Heart left ventricle (tissue), 16 donors: ENCODE measurements at regions of chr17 and their contacts with region 1.

Region 1: GRCh38 chr17:8041249-8041928 is 2.5 kb downstream of the ALOX15B start:
- DNase-seq: no peak
- ATAC-seq: peak; percentile 59 to 83 (median 63)
- H3K4me3 ChIP-seq: no peak overlapping the region
- H3K27ac ChIP-seq: peak overlapping the region in 2 of 12 donors; percentile 15 to 45
- H3K4me1 ChIP-seq: peaks cover 0 to 26% (median 0%) of the 10 kb centered on the region in 12 donors
- H3K27me3 ChIP-seq: peaks cover 0 to 27% (median 10%) of the 10 kb centered on the region in 9 donors
- CTCF ChIP-seq: peak; percentile 44 to 72 (median 56)
- POLR2A ChIP-seq: no peak

Region 2: GRCh38 chr17:7740481-7741001 is 300.8 kb before region 1 on chr17:
- intact Hi-C with region 1: loop called in 5 of 10 experiments (anchors 5 to 10 kb)
- DNase-seq: no peak
- ATAC-seq: peak in 1 of 4 donors; percentile 30
- H3K4me3 ChIP-seq: peak overlapping the region in 8 of 12 donors; percentile 12 to 35 (median 24)
- H3K27ac ChIP-seq: no peak overlapping the region
- H3K4me1 ChIP-seq: peaks cover 0 to 13% (median 0%) of the 10 kb centered on the region in 12 donors
- H3K27me3 ChIP-seq: peaks cover 0 to 13% (median 4%) of the 10 kb centered on the region in 9 donors
- CTCF ChIP-seq: no peak
- POLR2A ChIP-seq: no peak

Region 3: DNA sequence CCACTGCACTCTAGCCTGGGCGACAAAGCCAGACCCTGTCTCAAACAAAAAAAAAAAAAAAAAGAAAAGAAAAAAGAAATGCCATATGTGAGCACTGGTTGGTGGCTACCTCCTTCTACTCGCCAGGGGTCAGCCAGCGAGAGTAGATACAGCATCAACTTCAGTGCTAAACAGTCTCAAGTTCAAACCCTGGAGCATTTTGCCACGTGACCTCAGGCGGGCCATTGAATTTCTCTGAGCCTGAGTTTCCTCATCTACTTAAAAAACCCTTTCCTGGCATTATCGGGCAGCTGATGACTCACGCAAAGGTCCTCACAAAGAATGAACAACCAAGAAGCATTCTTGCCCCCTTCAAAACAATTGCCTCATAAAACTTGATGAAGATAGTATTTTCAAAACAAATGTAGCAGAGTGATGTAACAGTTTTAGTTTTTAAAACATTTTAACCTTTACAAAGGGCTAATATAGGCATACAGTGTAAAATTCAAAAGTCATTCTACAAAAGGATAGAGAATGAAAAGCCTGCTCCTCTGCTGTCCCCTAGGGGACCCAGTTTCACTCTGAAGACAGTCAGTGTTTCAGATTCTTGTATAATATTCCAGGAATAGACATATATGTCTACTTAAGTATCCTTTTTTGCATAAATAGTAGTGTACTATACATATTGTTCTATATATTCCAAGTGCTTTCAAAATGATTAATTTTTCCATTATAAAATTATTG is 295.5 kb before region 1 on chr17:
- intact Hi-C with region 1: loop called in 5 of 10 experiments (anchors 5 to 10 kb)
- DNase-seq: no peak
- ATAC-seq: no peak
- H3K4me3 ChIP-seq: no peak overlapping the region
- H3K27ac ChIP-seq: no peak overlapping the region
- H3K4me1 ChIP-seq: peaks cover 0 to 10% (median 5%) of the 10 kb centered on the region in 12 donors
- H3K27me3 ChIP-seq: peaks cover 0 to 5% (median 0%) of the 10 kb centered on the region in 9 donors
- CTCF ChIP-seq: no peak
- POLR2A ChIP-seq: no peak

Region 4: GRCh38 chr17:7818746-7819645 is 222.4 kb before region 1 on chr17:
- intact Hi-C with region 1: loop called in 1 of 10 experiments (anchors 10 kb)
- DNase-seq: no peak
- ATAC-seq: peak in 1 of 4 donors; percentile 8
- H3K4me3 ChIP-seq: no peak overlapping the region
- H3K27ac ChIP-seq: no peak overlapping the region
- H3K4me1 ChIP-seq: no peaks in the 10 kb centered on the region
- H3K27me3 ChIP-seq: no peaks in the 10 kb centered on the region
- CTCF ChIP-seq: no peak
- POLR2A ChIP-seq: no peak

Region 5: DNA sequence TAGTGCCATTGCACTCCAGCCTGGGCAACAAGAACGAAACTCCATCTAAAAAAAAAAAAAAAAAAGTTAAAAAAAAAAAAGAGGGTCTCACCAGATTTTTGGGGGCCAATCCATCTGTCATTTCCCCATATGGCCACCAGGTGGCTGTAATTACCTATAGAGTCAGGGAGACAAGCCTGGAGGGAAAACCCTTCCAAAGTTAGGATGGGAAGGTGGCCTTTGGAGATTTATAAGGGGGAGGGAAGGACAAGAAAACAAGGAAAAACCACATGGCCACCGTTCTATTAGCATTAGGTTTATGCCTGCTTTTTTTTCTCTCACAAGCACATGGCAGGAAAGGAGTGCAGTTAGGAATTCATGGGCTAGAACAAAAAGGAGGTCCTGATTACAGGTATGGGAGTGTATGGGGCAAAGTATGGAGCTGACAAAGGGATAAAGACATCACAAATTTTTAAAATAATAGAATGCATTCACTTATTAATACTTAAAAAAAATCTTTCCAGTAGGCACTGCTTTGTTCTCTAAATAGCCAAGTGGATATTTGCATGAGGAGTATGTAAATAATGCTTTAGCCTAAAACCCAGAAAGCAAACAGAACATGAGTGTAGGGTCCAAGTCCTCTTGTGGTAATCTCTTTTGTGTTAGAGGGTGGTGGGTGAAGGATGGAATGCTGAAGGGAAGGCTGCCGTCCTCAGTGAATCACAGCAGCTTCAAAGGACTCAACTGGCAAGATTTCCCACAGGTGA is 178.5 kb before region 1 on chr17:
- intact Hi-C with region 1: loop called in 3 of 10 experiments (anchors 5 kb)
- DNase-seq: peak in 1 of 5 donors; percentile 49
- ATAC-seq: no peak
- H3K4me3 ChIP-seq: no peak overlapping the region
- H3K27ac ChIP-seq: no peak overlapping the region
- H3K4me1 ChIP-seq: peaks cover 0 to 20% (median 13%) of the 10 kb centered on the region in 12 donors
- H3K27me3 ChIP-seq: no peaks in the 10 kb centered on the region
- CTCF ChIP-seq: peak; percentile 69 to 90 (median 83)
- POLR2A ChIP-seq: no peak

Region 6: DNA sequence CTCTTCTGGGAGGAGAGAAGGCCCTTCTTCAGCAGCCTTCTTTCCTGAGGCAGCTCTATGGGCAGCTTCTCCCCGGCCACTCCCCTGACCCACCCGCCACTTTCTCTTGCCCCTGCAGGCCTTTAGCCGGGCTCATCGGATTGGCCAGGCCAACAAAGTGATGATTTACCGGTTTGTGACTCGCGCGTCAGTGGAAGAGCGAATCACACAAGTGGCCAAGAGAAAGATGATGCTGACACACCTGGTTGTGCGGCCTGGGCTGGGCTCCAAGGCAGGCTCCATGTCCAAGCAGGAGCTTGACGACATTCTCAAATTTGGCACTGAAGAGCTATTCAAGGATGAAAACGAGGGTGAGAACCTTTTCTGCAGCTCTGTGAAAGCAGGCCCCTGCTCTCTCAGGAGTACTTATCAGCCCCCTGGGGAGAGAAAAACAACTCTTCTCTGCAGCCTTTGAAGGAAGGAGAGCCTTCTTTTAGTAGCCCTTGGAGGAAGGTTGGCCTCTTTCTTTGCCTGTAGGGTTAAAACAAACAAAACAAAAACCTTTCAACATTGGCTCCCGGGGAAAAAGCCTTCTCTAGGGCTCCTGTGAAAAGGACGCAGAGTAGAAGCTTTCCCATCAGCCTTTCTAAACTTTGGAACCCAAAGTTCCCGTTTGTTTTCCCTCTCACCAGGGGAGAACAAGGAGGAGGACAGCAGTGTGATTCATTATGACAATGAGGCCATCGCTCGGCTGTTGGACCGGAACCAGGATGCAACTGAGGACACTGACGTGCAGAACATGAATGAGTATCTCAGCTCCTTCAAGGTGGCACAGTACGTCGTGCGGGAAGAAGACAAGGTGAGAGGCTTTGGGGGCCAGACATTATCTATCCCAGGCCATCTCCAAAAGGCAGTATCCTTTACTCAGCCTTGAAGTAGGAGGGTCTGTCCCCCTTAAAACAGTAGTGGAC is 138.0 kb before region 1 on chr17:
- intact Hi-C with region 1: loop called in 1 of 10 experiments (anchors 5 kb)
- DNase-seq: no peak
- ATAC-seq: no peak
- H3K4me3 ChIP-seq: no peak overlapping the region
- H3K27ac ChIP-seq: no peak overlapping the region
- H3K4me1 ChIP-seq: no peaks in the 10 kb centered on the region
- H3K27me3 ChIP-seq: no peaks in the 10 kb centered on the region
- CTCF ChIP-seq: no peak
- POLR2A ChIP-seq: no peak

Region 7: GRCh38 chr17:7915611-7916382 is 125.6 kb before region 1 on chr17 and contains the start of gene RNF227:
- intact Hi-C with region 1: loop called in 8 of 10 experiments (anchors 2 to 5 kb)
- DNase-seq: peak; percentile 92 to 94 (median 92)
- ATAC-seq: peak; percentile 84 to 92 (median 90)
- H3K4me3 ChIP-seq: peak within 1 kb of the TSS; percentile 37 to 83 (median 63)
- H3K27ac ChIP-seq: peak within 1 kb of the TSS; percentile 85 to 98 (median 95)
- H3K4me1 ChIP-seq: peaks cover 0 to 32% (median 25%) of the 10 kb centered on the region in 12 donors
- H3K27me3 ChIP-seq: no peaks in the 10 kb centered on the region
- CTCF ChIP-seq: peak in 1 of 12 donors; percentile 13
- POLR2A ChIP-seq: peak in 1 of 2 donors; percentile 30
- total RNA-seq, gene RNF227: 0.51 to 4.9 (median 1.1) TPM

Region 8: GRCh38 chr17:8118769-8119580 is 77.6 kb after region 1 on chr17:
- intact Hi-C with region 1: no loop called
- DNase-seq: peak; percentile 84 to 94 (median 91)
- ATAC-seq: peak; percentile 79 to 86 (median 84)
- H3K4me3 ChIP-seq: peak overlapping the region; percentile 1 to 79 (median 64)
- H3K27ac ChIP-seq: peak overlapping the region; percentile 20 to 85 (median 74)
- H3K4me1 ChIP-seq: peaks cover 7 to 61% (median 43%) of the 10 kb centered on the region in 12 donors
- H3K27me3 ChIP-seq: peaks cover 0 to 60% (median 18%) of the 10 kb centered on the region in 9 donors
- CTCF ChIP-seq: peak; percentile 71 to 100 (median 88)
- POLR2A ChIP-seq: no peak

Region 9: DNA sequence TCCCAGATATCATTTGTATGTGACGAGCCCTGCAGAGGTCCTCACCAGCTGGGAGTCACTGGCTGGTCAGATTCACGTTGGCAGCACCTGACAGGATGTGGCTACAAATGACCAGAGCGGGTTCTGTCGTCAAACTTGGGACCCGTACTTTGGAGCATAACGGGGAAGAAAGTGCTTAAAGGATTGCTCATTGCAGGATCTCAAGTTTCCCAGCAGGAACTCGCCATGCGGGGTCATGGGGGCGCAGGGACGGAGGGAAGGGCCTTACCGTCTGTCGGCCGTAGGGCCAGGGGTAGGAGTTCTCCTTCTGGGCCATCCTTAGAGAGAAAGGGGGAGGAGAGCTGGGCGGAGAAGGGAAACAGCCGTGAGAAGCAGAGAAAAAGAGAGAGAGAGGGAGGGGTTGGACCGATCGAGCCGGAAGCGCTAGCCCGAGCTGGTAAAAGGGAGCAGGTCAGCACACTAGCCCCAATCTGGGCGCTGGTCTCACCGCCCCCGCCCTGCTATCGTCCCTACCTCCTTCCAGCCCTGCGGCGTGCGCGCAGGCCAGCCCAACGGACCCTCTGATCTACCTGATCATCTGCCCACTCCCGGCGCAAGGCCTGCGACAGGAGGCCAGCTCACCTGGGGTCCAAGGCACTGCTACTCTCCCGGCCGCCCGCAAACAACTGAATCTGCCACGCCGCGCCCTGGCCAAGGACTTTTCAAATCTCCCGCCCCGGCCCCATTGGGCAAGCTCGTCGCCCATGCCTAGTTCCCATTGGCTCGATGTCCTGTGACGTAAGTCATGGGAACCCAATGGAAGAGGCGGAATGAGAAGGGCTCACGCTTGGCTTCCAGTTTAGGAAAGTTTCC is 168.7 kb after region 1 on chr17 and contains the start of gene AURKB:
- intact Hi-C with region 1: no loop called
- DNase-seq: peak; percentile 94 to 97 (median 96)
- ATAC-seq: peak; percentile 93 to 99 (median 99)
- H3K4me3 ChIP-seq: peak within 1 kb of the TSS; percentile 22 to 73 (median 62)
- H3K27ac ChIP-seq: peak within 1 kb of the TSS; percentile 2 to 85 (median 76)
- H3K4me1 ChIP-seq: peaks cover 0 to 22% (median 8%) of the 10 kb centered on the region in 12 donors
- H3K27me3 ChIP-seq: no peaks in the 10 kb centered on the region
- CTCF ChIP-seq: peak in 1 of 12 donors; percentile 9
- POLR2A ChIP-seq: no peak
- total RNA-seq, gene AURKB: 0.23 to 10.3 (median 0.81) TPM in 5 of 9 donors, not detected in the others